ENCODE measurements at regions of chr15 and their contacts with region 1.

Region 1: DNA sequence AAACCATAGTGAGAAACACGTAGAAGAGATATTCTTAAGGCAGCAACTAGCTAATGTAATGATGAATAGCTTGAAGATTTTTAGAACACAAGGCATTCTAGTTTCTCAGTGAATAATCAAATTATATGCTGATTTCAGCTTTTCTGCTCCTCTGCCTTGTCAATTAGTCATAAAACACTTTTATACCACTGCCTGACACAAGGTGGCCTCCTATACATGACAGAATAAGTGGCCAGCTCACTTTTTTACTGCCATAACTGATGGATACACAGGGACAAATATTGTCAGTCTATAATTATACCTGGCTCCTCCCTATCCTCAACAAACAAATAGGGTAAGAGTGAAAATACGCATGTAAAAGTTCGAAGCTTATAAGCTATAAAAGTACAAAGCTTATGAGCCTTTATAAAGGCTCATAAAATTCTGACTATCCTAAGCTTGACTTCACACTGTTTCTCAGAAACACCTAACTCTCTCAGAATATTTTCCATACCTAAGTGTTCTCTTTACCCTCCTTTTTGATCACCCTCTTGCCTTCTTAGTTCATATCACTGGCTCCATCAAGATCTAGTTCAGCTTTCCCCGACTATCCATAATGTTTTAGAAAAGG is 81.6 kb downstream of the HERC1 start:
- DNase-seq: peak; percentile 68
- ATAC-seq: peak; percentile 89
- H3K4me3 ChIP-seq: no peak overlapping the region
- H3K27ac ChIP-seq: no peak overlapping the region
- H3K4me1 ChIP-seq: 0 out of 2 replicates have a peak, but pooled peaks cover 3% of the 10 kb centered on the region
- H3K27me3 ChIP-seq: no peaks in the 10 kb centered on the region
- CTCF ChIP-seq: peak; percentile 79

Region 2: GRCh38 chr15:63573533-63573932 is 178.6 kb before region 1 on chr15:
- CTCF ChIA-PET with region 1: no interaction called
- POLR2A ChIA-PET with region 1: no interaction called
- intact Hi-C with region 1: no loop called
- DNase-seq: no peak
- ATAC-seq: no peak
- H3K4me3 ChIP-seq: no peak overlapping the region
- H3K27ac ChIP-seq: no peak overlapping the region
- H3K4me1 ChIP-seq: no peaks in the 10 kb centered on the region
- H3K27me3 ChIP-seq: no peaks in the 10 kb centered on the region
- CTCF ChIP-seq: no peak

Region 3: GRCh38 chr15:63610200-63610841 is 141.9 kb before region 1 on chr15:
- CTCF ChIA-PET with region 1: interaction called, 7 read pairs
- POLR2A ChIA-PET with region 1: interaction called, 4 read pairs
- intact Hi-C with region 1: loop called (anchors 5 kb)
- DNase-seq: peak; percentile 85
- ATAC-seq: peak; percentile 86
- H3K4me3 ChIP-seq: no peak overlapping the region
- H3K27ac ChIP-seq: peak overlapping the region; percentile 49
- H3K4me1 ChIP-seq: peaks cover 19% of the 10 kb centered on the region
- H3K27me3 ChIP-seq: no peaks in the 10 kb centered on the region
- CTCF ChIP-seq: peak; percentile 83

Region 4: GRCh38 chr15:63729115-63729884 is 22.9 kb before region 1 on chr15:
- CTCF ChIA-PET with region 1: no interaction called
- POLR2A ChIA-PET with region 1: interaction called, 13 read pairs
- intact Hi-C with region 1: no loop called
- DNase-seq: peak; percentile 25
- ATAC-seq: no peak
- H3K4me3 ChIP-seq: no peak overlapping the region
- H3K27ac ChIP-seq: no peak overlapping the region
- H3K4me1 ChIP-seq: no peaks in the 10 kb centered on the region
- H3K27me3 ChIP-seq: no peaks in the 10 kb centered on the region
- CTCF ChIP-seq: no peak

Region 5: GRCh38 chr15:63783441-63783840 is 31.3 kb after region 1 on chr15:
- CTCF ChIA-PET with region 1: no interaction called
- POLR2A ChIA-PET with region 1: no interaction called
- intact Hi-C with region 1: no loop called
- DNase-seq: no peak
- ATAC-seq: no peak
- H3K4me3 ChIP-seq: no peak overlapping the region
- H3K27ac ChIP-seq: no peak overlapping the region
- H3K4me1 ChIP-seq: no peaks in the 10 kb centered on the region
- H3K27me3 ChIP-seq: no peaks in the 10 kb centered on the region
- CTCF ChIP-seq: no peak

Region 6: GRCh38 chr15:63833021-63833696 is 81.0 kb after region 1 on chr15:
- CTCF ChIA-PET with region 1: no interaction called
- POLR2A ChIA-PET with region 1: no interaction called
- intact Hi-C with region 1: loop called (anchors 5 kb)
- DNase-seq: peak; percentile 16
- ATAC-seq: peak; percentile 66
- H3K4me3 ChIP-seq: peak overlapping the region; percentile 98
- H3K27ac ChIP-seq: no peak overlapping the region
- H3K4me1 ChIP-seq: peaks cover 19% of the 10 kb centered on the region
- H3K27me3 ChIP-seq: no peaks in the 10 kb centered on the region
- CTCF ChIP-seq: no peak

Region 7: DNA sequence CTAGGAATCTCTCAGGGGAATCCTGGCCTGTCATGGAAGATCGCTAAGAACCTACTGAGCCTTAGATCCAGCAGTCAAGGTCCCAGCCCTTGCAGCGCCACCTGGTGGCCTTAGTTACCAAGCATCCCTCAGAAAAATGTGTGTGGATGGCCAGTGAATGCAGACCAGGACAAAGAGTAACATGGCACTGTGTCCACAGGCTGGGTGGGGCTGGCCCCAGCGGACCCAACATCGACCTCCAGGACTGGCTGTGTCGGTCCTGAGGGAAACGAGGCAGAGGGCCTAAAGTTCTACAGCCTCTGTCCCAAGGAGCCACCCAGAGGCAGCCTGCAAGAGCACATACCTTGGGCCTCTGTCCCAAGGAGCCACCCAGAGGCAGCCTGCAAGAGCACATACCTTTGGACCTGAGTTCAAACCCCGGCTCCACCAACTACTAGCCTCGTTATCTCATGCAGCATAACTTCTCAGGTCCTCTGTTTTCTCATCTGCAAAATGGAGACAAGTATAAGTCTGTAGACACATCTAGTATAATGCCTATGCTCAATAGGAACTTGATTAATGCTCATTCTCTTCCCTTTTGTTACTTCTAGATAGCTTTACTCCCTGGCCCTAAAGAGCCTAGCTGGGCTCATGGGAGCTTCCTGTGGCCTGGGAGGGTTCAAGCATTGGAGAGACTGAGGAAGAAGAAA is 139.0 kb after region 1 on chr15:
- CTCF ChIA-PET with region 1: interaction called, 3 read pairs
- POLR2A ChIA-PET with region 1: no interaction called
- intact Hi-C with region 1: loop called (anchors 2 kb)
- DNase-seq: peak; percentile 81
- ATAC-seq: peak; percentile 93
- H3K4me3 ChIP-seq: no peak overlapping the region
- H3K27ac ChIP-seq: no peak overlapping the region
- H3K4me1 ChIP-seq: 0 out of 2 replicates have a peak, but pooled peaks cover under 1% of the 10 kb centered on the region
- H3K27me3 ChIP-seq: no peaks in the 10 kb centered on the region
- CTCF ChIP-seq: peak; percentile 86

Region 8: DNA sequence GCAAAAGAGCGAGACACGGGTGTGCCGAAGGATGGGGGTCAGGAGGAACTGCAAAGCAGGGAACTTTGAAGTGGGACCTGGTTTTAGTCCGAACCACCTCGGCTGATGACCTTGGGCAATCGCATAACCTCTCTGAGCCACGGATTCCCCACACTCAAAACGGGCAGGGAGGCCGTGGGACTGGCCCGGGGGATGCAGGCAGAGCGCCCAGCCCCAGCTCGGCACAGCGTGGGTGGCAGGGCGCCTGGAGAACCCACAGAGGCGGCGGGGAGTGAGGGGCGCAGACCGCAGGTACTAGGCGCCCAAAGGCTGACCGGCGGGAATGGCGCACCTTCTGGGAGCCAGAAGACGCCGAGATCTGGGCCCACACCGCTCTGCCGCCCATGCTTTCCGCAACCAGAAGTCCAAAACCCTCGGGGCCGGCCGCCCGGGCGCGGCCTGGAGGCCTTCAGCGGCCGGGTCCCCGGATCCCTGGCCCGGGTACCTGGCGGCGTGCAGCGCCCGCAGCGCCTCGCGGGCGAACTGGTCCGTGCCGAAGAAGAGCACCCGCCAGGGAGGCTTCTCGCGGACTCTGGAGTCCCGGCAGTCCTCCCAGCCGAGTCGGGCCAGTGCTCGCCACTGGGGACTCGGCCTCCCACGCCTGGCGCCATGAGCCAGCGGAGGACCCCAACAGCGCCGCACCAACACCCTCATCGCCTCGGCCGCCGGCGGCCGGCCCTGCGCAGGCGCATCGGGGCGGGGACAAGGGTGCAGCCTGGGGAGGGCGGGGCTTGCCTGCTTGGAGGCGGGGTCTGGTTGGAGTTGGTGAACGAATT is 1276.9 kb after region 1 on chr15 and contains the start of gene MTFMT:
- CTCF ChIA-PET with region 1: no interaction called
- POLR2A ChIA-PET with region 1: no interaction called
- intact Hi-C with region 1: no loop called
- DNase-seq: peak; percentile 71
- ATAC-seq: peak; percentile 70
- H3K4me3 ChIP-seq: peak within 1 kb of the TSS; percentile 91
- H3K27ac ChIP-seq: no peak within 1 kb of the TSS
- H3K4me1 ChIP-seq: peaks cover 13% of the 10 kb centered on the region; the same call in 1 of the 2 replicates
- H3K27me3 ChIP-seq: no peaks in the 10 kb centered on the region
- CTCF ChIP-seq: no peak
- total RNA-seq, gene MTFMT: 15.5 and 31.3 TPM in 2 replicates